MCF 10A (cell line): ENCODE measurements at regions of chr5 and their contacts with region 1.

Region 1: GRCh38 chr5:42908509-42909488 is 97.1 kb upstream of the SELENOP start:
- DNase-seq: peak; percentile 92
- H3K4me3 Mint-ChIP-seq: peak overlapping the region; percentile 80
- H3K27ac Mint-ChIP-seq: no peak overlapping the region
- H3K4me1 Mint-ChIP-seq: peaks cover 4% of the 10 kb centered on the region
- H3K27me3 Mint-ChIP-seq: no peaks in the 10 kb centered on the region
- CTCF ChIP-seq: peak; percentile 82

Region 2: DNA sequence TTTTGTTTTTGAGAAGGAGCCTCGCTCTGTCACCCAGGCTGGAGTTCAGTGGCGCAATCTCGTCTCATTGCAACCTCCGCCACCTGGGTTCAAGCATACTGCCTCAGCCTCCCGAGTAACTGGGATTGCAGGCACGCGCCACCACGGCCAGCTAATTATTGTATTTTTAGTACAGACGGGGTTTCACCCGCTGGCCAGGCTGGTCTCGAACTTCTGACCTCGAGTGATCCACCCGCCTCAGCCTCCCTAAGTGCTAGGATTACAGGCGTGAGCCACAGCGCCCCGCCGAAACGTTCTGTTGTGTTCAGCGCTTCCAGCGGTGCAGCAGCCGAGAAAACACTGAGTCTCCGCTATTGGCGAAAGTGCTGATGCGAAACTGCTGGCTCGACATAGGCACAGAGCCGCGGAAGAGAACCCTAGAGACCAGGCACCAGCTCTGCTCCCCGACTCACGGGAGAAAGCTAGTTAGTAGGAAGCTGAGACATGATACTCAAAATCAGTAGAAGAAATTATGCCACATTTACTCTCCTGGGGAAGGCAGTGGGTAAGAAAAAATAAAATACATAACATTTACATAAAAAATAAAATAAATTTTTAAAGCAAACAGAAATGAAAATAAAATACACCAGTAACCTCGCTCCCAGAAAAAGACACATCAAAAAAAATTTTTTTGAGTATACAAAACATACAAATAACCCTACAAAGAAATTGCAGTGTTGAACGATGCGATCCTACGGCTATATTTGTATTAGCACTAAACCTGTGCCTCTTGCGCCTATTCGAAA is 99.8 kb after region 1 on chr5:
- CTCF ChIA-PET with region 1: interaction called, 28 read pairs
- POLR2A ChIA-PET with region 1: interaction called, 9 read pairs
- intact Hi-C with region 1: loop called (anchors 2 kb)
- DNase-seq: peak; percentile 82
- H3K4me3 Mint-ChIP-seq: peak overlapping the region; percentile 76
- H3K27ac Mint-ChIP-seq: peak overlapping the region; percentile 94
- H3K4me1 Mint-ChIP-seq: peaks cover 17% of the 10 kb centered on the region
- H3K27me3 Mint-ChIP-seq: no peaks in the 10 kb centered on the region
- CTCF ChIP-seq: no peak

Region 3: DNA sequence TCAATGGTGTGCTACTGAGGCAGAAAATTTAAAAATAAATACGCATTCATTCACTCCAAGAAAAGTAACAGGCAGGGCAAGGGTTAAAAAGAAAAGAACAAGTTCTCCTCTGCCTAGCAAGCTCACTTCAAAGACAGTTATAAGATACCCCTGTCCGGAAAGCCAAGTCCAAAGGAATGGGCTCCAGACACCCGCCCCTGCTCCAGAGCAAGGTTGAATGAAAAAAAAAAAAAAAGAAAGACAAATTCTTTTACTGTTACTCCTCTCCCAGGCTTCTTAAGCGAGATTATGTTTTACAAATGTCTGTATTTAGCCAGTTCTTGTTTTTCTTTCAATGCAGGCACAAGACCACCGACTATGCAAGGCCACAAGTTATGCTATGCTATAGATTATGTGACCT is 140.4 kb after region 1 on chr5:
- CTCF ChIA-PET with region 1: interaction called, 13 read pairs
- POLR2A ChIA-PET with region 1: no interaction called
- intact Hi-C with region 1: no loop called
- DNase-seq: no peak
- H3K4me3 Mint-ChIP-seq: no peak overlapping the region
- H3K27ac Mint-ChIP-seq: no peak overlapping the region
- H3K4me1 Mint-ChIP-seq: peaks cover 6% of the 10 kb centered on the region
- H3K27me3 Mint-ChIP-seq: no peaks in the 10 kb centered on the region
- CTCF ChIP-seq: no peak

Region 4: GRCh38 chr5:43066799-43067741 is 158.3 kb after region 1 on chr5:
- CTCF ChIA-PET with region 1: interaction called, 15 read pairs
- POLR2A ChIA-PET with region 1: interaction called, 90 read pairs
- intact Hi-C with region 1: loop called (anchors 1 kb)
- DNase-seq: peak; percentile 91
- H3K4me3 Mint-ChIP-seq: peak overlapping the region; percentile 99
- H3K27ac Mint-ChIP-seq: peak overlapping the region; percentile 93
- H3K4me1 Mint-ChIP-seq: peaks cover 12% of the 10 kb centered on the region
- H3K27me3 Mint-ChIP-seq: no peaks in the 10 kb centered on the region
- CTCF ChIP-seq: no peak

Region 5: DNA sequence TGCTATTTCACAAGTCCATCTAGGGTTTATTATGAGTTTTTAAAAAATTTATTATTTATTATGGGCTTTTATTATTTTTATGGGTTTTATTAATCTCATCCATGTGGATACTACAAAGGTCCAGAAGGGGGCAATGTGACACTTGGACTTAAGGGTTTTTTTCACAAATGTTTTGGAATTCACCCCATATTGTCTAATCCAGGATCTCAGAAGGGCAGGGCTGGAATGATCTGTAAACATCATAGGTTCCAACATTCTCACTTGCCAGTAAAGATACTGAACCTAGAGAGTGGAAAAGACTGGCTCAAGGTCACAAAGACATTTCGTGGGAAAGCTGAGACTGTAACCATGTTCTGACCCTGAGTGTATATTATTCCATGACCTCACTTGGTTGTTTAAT is 318.9 kb after region 1 on chr5:
- CTCF ChIA-PET with region 1: interaction called, 4 read pairs
- POLR2A ChIA-PET with region 1: no interaction called
- intact Hi-C with region 1: loop called (anchors 1 kb)
- DNase-seq: peak; percentile 67
- H3K4me3 Mint-ChIP-seq: no peak overlapping the region
- H3K27ac Mint-ChIP-seq: no peak overlapping the region
- H3K4me1 Mint-ChIP-seq: peaks cover 4% of the 10 kb centered on the region
- H3K27me3 Mint-ChIP-seq: no peaks in the 10 kb centered on the region
- CTCF ChIP-seq: peak; percentile 51